Activated CD4-positive, alpha-beta memory T cell treated with anti-CD3 and anti-CD28 coated beads, Interleukin-2, amount 10 ng/mL, durations not matched to agents 7 days and 5 days (primary cell): ENCODE measurements at regions of chrX and their contacts with region 1.

Region 1: GRCh38 chrX:81201671-81202455 is at the starts of genes HMGN5 and SH3BGRL:
- DNase-seq: peak; percentile 75
- H3K4me3 Mint-ChIP-seq: peak within 1 kb of the TSS; percentile 99
- H3K27ac Mint-ChIP-seq: peak within 1 kb of the TSS; percentile 96
- H3K4me1 Mint-ChIP-seq: peaks cover 35% of the 10 kb centered on the region
- H3K27me3 Mint-ChIP-seq: no peaks in the 10 kb centered on the region
- total RNA-seq, gene HMGN5: 3.3 to 5.8 TPM
- total RNA-seq, gene SH3BGRL: 79.6 to 84.7 TPM

Region 2: DNA sequence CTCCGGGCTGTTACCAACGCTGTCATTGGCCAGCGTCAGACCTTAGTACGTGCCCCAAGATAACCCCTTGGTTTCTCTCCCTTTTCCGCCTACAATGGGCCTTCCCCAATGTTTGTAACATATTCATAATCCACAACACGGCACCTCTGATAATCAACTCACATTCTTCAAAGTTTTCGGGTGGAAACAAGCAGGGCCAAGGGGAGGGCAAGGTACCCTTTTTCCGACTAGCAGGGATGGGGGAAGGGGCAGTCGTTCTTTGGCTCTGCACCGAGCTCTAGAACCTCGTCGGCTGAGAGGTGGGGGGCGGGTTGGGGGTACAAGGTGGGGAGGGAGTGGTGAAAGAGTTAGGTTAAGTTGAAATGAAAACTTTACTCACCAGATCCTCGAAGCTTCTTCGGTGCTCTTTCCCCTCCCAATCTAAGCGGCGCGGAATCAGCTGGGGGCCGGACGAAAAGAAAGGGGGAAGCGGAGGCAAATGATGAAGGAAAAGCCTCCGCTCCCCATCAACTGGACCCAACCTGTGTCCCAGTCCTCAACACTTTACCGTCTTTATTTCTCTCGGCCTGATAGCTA is 393.6 kb before region 1 on chrX:
- CTCF ChIA-PET with region 1: interaction called, 10 read pairs
- POLR2A ChIA-PET with region 1: interaction called, 9 read pairs
- DNase-seq: peak; percentile 79
- H3K4me3 Mint-ChIP-seq: peak overlapping the region; percentile 88
- H3K27ac Mint-ChIP-seq: peak overlapping the region; percentile 94
- H3K4me1 Mint-ChIP-seq: peaks cover 33% of the 10 kb centered on the region
- H3K27me3 Mint-ChIP-seq: peaks cover 2% of the 10 kb centered on the region

Region 3: DNA sequence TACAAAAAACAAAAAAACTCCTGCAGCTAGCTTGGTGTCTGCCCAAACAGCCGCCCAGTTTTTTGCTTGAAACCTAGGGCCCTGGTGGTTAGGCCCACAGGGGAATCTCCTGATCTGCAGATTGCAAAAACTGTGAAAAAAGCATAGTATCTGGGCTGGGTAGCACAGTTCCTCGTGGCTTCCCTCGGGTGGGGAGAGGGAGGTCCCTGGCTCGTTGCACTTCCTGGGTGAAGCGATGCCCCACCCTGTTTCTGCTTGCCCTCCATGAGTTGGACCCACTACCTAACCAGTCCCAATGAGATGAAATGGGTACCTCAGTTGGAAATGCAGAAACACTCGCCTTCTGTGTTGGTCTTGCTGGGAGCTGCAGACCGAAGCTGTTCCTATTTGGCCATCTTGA is 373.6 kb before region 1 on chrX:
- CTCF ChIA-PET with region 1: no interaction called
- POLR2A ChIA-PET with region 1: no interaction called
- DNase-seq: no peak
- H3K4me3 Mint-ChIP-seq: no peak overlapping the region
- H3K27ac Mint-ChIP-seq: no peak overlapping the region
- H3K4me1 Mint-ChIP-seq: no peaks in the 10 kb centered on the region
- H3K27me3 Mint-ChIP-seq: no peaks in the 10 kb centered on the region